ENCODE measurements at regions of chr3 and their contacts with region 1.

Region 1: DNA sequence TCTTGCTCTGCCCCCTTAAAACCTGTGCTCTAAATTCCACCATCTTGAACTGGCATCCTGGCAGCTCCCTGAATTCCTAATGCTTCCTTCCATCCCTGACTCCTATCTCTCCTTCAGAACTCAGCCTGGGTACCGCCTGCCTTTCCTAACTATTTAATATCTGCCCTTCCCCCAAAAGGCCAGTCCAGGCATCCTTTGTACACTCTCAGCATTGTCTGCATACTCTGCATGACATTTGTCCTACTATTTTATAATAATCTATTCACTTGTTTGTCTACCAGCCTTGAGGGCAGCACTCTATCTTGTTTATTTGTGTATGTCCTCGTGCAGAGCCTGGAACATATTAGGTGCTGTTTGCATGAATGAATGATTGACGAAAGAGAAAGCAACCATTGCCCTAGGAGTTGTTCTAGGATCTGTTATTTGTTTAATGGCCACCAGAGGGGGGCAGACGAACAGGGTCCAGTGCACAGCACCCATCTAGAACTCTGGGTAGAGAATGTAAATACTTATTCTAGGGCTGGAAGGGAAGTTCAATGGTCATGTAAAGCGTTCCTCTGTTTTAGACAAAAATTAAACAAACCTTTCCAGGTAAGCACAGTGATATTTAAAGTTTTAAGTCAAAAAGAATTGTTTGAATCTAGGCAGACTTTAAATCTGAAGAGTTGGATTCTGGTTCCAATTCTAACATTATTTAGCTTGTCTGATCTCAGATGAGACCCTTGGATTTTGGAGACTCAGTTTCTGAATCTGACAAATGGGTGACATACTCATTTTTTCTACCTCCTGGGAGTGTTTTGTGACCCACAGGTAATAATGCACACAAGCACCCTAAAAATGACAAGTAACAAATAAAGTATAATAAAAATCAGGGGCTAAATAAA is 125.8 kb upstream of the GALNT15 start:
- DNase-seq: peak in 1 of 2 donors; percentile 62
- H3K4me3 ChIP-seq: no peak overlapping the region
- H3K27ac ChIP-seq: no peak overlapping the region
- H3K4me1 ChIP-seq: no peaks in the 10 kb centered on the region
- H3K27me3 ChIP-seq: no peaks in the 10 kb centered on the region
- CTCF ChIP-seq: peak; percentile 78 to 92 (median 84)
- POLR2A ChIP-seq: no peak

Region 2: DNA sequence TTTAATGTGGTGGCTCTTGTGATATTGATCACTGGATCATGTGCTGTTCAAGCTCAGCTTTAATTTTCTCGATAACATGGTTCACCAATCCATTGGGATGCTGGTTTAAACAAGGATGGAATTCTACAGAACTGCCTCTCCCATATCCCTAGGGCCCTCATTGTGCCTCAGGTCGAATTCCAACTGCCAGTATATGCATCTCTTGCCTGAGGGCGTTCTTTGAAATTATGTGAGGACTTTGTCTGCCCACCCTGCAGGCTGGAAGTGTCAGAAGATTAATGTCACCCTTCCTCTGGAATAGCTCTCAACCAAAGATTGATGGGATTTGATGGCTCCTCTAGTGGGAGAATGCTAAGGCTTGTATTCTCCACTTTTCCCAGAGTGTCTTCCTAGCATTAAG is 49.8 kb before region 1 on chr3:
- intact Hi-C with region 1: no loop called
- DNase-seq: no peak
- H3K4me3 ChIP-seq: no peak overlapping the region
- H3K27ac ChIP-seq: no peak overlapping the region
- H3K4me1 ChIP-seq: no peaks in the 10 kb centered on the region
- H3K27me3 ChIP-seq: no peaks in the 10 kb centered on the region
- CTCF ChIP-seq: no peak
- POLR2A ChIP-seq: no peak

Region 3: GRCh38 chr3:16177962-16178627 is 129.4 kb after region 1 on chr3:
- intact Hi-C with region 1: loop called (anchors 5 kb)
- DNase-seq: peak; percentile 77 to 83
- H3K4me3 ChIP-seq: peak overlapping the region; percentile 16 to 40
- H3K27ac ChIP-seq: peak overlapping the region in 1 of 2 donors; percentile 4
- H3K4me1 ChIP-seq: peaks cover 0 to 5% of the 10 kb centered on the region in 2 donors
- H3K27me3 ChIP-seq: no peaks in the 10 kb centered on the region
- CTCF ChIP-seq: peak; percentile 94 to 97 (median 96)
- POLR2A ChIP-seq: no peak

Region 4: DNA sequence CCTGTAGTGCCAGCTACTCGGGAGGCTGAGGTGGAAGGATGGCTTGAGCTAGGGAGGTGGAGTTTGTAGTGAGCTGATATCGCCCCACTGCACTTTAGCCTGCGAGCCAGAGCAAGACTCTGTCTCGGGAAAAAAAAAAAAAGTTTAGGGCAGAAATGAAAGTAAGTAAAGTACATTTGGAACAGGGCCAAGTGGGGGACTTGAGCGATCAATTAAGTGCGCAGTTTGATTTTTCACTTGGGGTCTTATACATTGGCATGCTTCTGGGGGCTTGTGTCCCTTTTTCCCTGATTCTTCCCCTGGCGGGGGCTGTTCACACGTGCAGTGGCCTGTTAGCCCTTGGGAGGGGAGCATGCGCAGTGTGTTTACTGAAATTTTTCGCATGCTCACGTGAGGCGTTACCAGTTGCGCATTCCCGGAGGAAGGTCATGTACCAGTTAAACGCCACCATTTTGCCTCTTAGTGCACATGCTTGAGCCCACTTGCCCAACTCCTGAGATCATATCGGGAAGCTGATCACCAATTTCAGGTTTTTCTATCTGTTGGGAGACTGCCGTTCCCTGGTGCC is 167.8 kb after region 1 on chr3:
- intact Hi-C with region 1: no loop called
- DNase-seq: no peak
- H3K4me3 ChIP-seq: no peak overlapping the region
- H3K27ac ChIP-seq: no peak overlapping the region
- H3K4me1 ChIP-seq: no peaks in the 10 kb centered on the region
- H3K27me3 ChIP-seq: no peaks in the 10 kb centered on the region
- CTCF ChIP-seq: no peak
- POLR2A ChIP-seq: no peak

Region 5: DNA sequence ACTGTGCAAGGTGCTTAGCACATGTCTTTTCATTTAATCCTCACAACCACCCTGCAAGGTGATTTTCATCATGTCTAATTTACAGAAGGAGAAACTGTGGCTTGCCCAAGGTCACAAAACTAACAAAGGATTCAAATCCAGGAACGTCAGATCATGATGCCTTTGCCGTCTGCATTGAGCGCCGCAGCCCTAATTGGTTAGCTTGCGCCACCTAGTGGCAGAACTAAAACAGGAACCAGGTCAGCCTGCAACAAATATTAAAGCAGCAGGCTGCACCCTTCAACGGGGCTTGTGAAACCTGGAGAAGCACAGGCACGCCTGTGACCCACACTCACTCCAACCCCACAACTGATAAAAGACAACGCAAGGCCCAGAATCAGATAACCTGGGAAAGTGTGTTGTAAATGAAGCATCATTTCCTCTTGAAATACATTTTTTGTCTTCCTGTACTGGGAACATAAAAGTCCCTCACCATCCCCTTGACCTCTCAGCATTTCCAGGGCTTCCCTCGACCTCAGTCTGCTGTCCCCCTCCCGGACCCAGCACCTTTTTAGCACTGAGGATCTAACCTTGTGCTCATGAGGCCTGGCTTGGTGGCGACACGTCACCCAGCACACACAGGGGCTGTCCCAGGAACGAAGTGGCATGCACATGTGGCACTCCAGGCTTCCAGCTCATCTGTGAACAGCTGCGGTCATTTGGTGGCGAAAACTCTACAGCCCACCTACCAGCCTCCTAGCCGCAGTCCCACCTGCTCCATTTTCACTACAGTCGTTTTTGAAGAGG is 198.8 kb after region 1 on chr3:
- intact Hi-C with region 1: loop called (anchors 5 kb)
- DNase-seq: peak; percentile 80 to 85
- H3K4me3 ChIP-seq: no peak overlapping the region
- H3K27ac ChIP-seq: no peak overlapping the region
- H3K4me1 ChIP-seq: no peaks in the 10 kb centered on the region
- H3K27me3 ChIP-seq: no peaks in the 10 kb centered on the region
- CTCF ChIP-seq: peak; percentile 86 to 94 (median 93)
- POLR2A ChIP-seq: no peak